Activated CD4-positive, alpha-beta T cell treated with anti-CD3 and anti-CD28 coated beads for 36 hours (primary cell): ENCODE measurements at regions of chr22 and their contacts with region 1.

Region 1: DNA sequence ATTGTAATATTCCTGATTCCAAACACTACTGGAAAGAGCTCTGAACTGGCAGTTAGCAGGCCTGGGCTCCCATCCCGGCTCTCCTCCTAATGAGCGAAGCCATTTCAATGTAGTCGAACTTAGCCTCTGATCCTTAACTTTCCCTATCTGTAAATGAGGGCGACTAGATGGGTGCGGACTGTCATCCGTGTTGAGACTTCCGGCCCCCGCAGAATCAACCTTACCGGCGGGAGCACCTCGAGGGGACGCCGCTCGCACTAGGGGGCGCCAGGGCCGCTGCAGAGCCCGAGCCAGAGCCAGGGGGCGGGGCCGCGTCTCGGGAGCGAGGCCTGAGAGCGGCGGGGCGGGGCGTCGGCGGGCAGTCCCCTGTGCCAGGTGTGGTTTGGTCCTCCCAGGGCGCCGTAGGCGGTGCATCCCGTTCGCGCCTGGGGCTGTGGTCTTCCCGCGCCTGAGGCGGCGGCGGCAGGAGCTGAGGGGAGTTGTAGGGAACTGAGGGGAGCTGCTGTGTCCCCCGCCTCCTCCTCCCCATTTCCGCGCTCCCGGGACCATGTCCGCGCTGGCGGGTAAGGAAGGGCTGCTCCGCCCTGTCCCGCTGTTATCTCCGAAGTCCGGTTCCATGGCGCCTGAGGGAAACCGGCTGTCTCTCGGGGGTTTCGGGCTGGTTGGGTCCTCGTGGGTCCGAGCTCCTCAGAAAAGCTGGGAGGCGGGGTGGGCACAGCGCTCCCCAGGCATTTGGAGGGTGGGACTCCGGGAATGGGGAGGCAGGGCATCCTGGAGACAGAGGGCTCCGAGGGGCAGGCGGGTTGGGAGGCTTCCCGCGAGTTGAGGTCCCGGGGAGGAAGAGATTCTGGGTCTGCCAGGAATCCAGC is at the start of gene LIMK2:
- DNase-seq: peak; percentile 99
- ATAC-seq: peak; percentile 97
- H3K4me3 Mint-ChIP-seq: peak within 1 kb of the TSS; percentile 85
- H3K27ac Mint-ChIP-seq: peak within 1 kb of the TSS; percentile 92
- H3K4me1 Mint-ChIP-seq: peaks cover 45% of the 10 kb centered on the region
- H3K27me3 Mint-ChIP-seq: no peaks in the 10 kb centered on the region
- total RNA-seq, gene LIMK2: 31.8 to 34.4 TPM

Region 2: GRCh38 chr22:30968924-30969539 is 243.1 kb before region 1 on chr22 and contains the start of gene TUG1:
- CTCF ChIA-PET with region 1: no interaction called
- POLR2A ChIA-PET with region 1: no interaction called
- intact Hi-C with region 1: loop called in 1 of 2 experiments (anchors 1 kb)
- DNase-seq: peak; percentile 99
- ATAC-seq: peak; percentile 93
- H3K4me3 Mint-ChIP-seq: peak within 1 kb of the TSS; percentile 90
- H3K27ac Mint-ChIP-seq: peak within 1 kb of the TSS; percentile 95
- H3K4me1 Mint-ChIP-seq: peaks cover 51% of the 10 kb centered on the region
- H3K27me3 Mint-ChIP-seq: no peaks in the 10 kb centered on the region
- total RNA-seq, gene TUG1: 46.8 to 56.4 TPM

Region 3: GRCh38 chr22:31170971-31171370 is 41.1 kb before region 1 on chr22:
- CTCF ChIA-PET with region 1: no interaction called
- POLR2A ChIA-PET with region 1: no interaction called
- intact Hi-C with region 1: no loop called
- DNase-seq: no peak
- ATAC-seq: no peak
- H3K4me3 Mint-ChIP-seq: no peak overlapping the region
- H3K27ac Mint-ChIP-seq: no peak overlapping the region
- H3K4me1 Mint-ChIP-seq: peaks cover 47% of the 10 kb centered on the region
- H3K27me3 Mint-ChIP-seq: no peaks in the 10 kb centered on the region

Region 4: GRCh38 chr22:31223786-31224191 is 11.7 kb after region 1 on chr22:
- CTCF ChIA-PET with region 1: interaction called, 18 read pairs
- POLR2A ChIA-PET with region 1: interaction called, 3 read pairs
- intact Hi-C with region 1: no loop called
- DNase-seq: no peak
- ATAC-seq: no peak
- H3K4me3 Mint-ChIP-seq: no peak overlapping the region
- H3K27ac Mint-ChIP-seq: peak overlapping the region; percentile 15
- H3K4me1 Mint-ChIP-seq: peaks cover 26% of the 10 kb centered on the region
- H3K27me3 Mint-ChIP-seq: no peaks in the 10 kb centered on the region

Region 5: GRCh38 chr22:31278622-31279326 is 66.7 kb after region 1 on chr22:
- CTCF ChIA-PET with region 1: interaction called, 20 read pairs
- POLR2A ChIA-PET with region 1: interaction called, 3 read pairs
- intact Hi-C with region 1: loop called in 1 of 2 experiments (anchors 5 kb)
- DNase-seq: peak; percentile 52
- ATAC-seq: peak; percentile 90
- H3K4me3 Mint-ChIP-seq: no peak overlapping the region
- H3K27ac Mint-ChIP-seq: peak overlapping the region; percentile 86
- H3K4me1 Mint-ChIP-seq: peaks cover 79% of the 10 kb centered on the region
- H3K27me3 Mint-ChIP-seq: no peaks in the 10 kb centered on the region

Region 6: GRCh38 chr22:31399211-31400028 is 187.3 kb after region 1 on chr22 and contains the start of gene DRG1:
- CTCF ChIA-PET with region 1: no interaction called
- POLR2A ChIA-PET with region 1: no interaction called
- intact Hi-C with region 1: loop called in 1 of 2 experiments (anchors 1 kb)
- DNase-seq: peak; percentile 99
- ATAC-seq: peak; percentile 98
- H3K4me3 Mint-ChIP-seq: peak within 1 kb of the TSS; percentile 99
- H3K27ac Mint-ChIP-seq: peak within 1 kb of the TSS; percentile 91
- H3K4me1 Mint-ChIP-seq: peaks cover 18% of the 10 kb centered on the region
- H3K27me3 Mint-ChIP-seq: peaks cover under 1% of the 10 kb centered on the region
- total RNA-seq, gene DRG1: 104 to 106 TPM